CD4-positive, alpha-beta T cell (primary cell): ENCODE measurements at regions of chr19 and their contacts with region 1.

Region 1: DNA sequence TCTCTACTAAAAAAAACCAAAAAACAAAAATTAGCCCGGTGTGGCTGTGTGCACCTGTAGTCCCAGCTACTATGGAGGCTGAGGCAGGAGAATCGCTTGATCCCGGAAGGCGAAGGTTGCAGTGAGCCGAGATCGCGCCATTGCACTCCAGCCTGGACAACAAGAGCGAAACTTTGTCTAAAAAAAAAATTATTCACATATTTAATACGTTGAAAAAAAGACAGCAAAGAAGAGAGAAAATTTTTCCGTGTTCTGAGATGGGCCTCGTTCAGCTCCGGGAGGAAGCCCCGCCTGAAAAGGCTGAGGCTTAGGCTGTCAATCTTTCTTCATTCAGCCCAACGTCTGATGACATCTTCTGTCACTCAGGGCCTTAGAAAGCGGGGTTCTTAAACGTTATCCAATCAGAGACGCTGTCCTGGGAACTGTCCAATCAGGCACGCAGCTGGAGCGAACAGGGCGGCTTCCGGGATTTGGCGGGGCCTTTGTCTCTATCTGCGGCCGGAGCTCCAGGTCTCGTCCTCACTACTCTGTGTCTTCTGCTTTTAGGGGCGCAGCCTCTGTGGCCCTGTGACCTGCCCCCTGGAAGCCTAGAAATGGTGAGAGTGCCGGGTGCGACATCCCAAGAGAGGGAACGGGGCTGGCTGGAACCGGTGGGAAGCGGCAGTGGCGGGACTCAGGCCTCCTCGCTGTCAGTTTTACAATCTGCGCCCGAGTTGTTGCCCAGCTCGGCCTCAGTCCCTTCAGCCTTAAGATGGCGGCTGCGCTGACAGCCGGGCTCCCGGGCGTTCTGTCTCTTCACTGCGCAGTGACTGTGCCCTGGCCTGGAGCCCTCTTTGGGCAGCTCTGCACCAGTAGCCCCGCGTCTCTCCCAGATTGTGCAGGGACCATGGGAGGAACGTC is at the start of gene ZNF726:
- DNase-seq: peak; percentile 72 to 95 (median 79)
- ATAC-seq: peak; percentile 99
- H3K4me3 ChIP-seq: peak within 1 kb of the TSS; percentile 74
- H3K4me3 Mint-ChIP-seq: peak within 1 kb of the TSS; percentile 98
- H3K27ac ChIP-seq: peak within 1 kb of the TSS in 1 of 2 donors; percentile 53
- H3K27ac Mint-ChIP-seq: peak within 1 kb of the TSS; percentile 87
- H3K4me1 ChIP-seq: peaks cover 16% of the 10 kb centered on the region
- H3K4me1 Mint-ChIP-seq: peaks cover 7% of the 10 kb centered on the region
- H3K27me3 ChIP-seq: no peaks in the 10 kb centered on the region
- H3K27me3 Mint-ChIP-seq: no peaks in the 10 kb centered on the region
- CTCF ChIP-seq: no peak
- total RNA-seq, gene ZNF726: 2.6 to 3.5 TPM

Region 2: GRCh38 chr19:22634450-22634827 is 1280.2 kb before region 1 on chr19:
- CTCF ChIA-PET with region 1: no interaction called
- POLR2A ChIA-PET with region 1: no interaction called
- intact Hi-C with region 1: loop called in 1 of 2 experiments (anchors 5 kb)
- DNase-seq: no peak
- ATAC-seq: peak; percentile 16
- H3K4me3 ChIP-seq: peak overlapping the region; percentile 65
- H3K4me3 Mint-ChIP-seq: peak overlapping the region; percentile 96
- H3K27ac ChIP-seq: no peak overlapping the region
- H3K27ac Mint-ChIP-seq: peak overlapping the region; percentile 83
- H3K4me1 ChIP-seq: no peaks in the 10 kb centered on the region
- H3K4me1 Mint-ChIP-seq: peaks cover 16% of the 10 kb centered on the region
- H3K27me3 ChIP-seq: peaks cover 0 to 2% of the 10 kb centered on the region in 2 experiments
- H3K27me3 Mint-ChIP-seq: no peaks in the 10 kb centered on the region
- CTCF ChIP-seq: no peak

Region 3: DNA sequence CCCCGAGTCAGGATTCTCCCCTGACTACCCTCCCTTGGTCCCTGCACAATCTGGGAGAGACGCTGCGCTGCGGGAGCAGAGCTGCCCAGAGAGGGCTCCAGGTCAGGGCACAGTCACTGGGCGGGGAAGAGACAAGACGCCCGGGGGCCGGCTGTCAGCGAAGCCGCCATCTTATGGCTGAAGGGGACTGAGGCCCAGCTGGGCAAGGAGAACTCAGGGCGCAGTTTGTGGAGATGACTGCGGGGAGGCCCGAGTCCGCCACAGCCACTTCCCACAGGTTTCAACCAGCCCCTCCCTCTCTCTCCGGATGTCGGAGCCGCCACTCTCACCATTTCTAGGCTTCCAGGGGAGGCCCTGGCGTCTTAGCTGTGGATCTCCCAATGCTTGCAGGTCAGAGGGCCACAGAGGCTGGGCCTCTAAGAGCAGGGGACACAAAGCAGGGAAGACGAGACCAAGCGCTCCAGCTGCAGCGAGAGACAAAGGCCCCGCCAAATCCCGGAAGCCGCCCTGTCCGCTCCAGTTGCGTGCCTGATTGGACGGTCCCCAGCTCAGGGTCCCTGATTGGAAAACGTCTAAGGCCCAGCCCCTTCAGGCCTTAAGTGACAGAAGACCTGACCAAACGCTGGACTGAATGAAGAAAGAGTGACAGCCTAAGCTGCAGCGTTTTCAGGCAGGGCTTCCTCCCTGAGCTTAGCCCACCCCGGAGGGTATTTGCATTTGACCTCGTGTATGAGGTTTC is 664.6 kb before region 1 on chr19 and contains the start of gene ZNF724:
- CTCF ChIA-PET with region 1: no interaction called
- POLR2A ChIA-PET with region 1: no interaction called
- intact Hi-C with region 1: loop called (anchors 10 kb)
- DNase-seq: peak; percentile 78 to 94 (median 82)
- ATAC-seq: peak; percentile 99
- H3K4me3 ChIP-seq: peak within 1 kb of the TSS; percentile 83
- H3K4me3 Mint-ChIP-seq: peak within 1 kb of the TSS; percentile 98
- H3K27ac ChIP-seq: peak within 1 kb of the TSS; percentile 29 to 55
- H3K27ac Mint-ChIP-seq: peak within 1 kb of the TSS; percentile 83
- H3K4me1 ChIP-seq: peaks cover 12% of the 10 kb centered on the region
- H3K4me1 Mint-ChIP-seq: peaks cover 13% of the 10 kb centered on the region
- H3K27me3 ChIP-seq: no peaks in the 10 kb centered on the region
- H3K27me3 Mint-ChIP-seq: no peaks in the 10 kb centered on the region
- CTCF ChIP-seq: no peak
- total RNA-seq, gene ZNF724: 4.2 to 5.5 TPM

Region 4: GRCh38 chr19:23283927-23284326 is 630.7 kb before region 1 on chr19:
- CTCF ChIA-PET with region 1: no interaction called
- POLR2A ChIA-PET with region 1: no interaction called
- intact Hi-C with region 1: loop called in 1 of 2 experiments (anchors 5 kb)
- DNase-seq: peak; percentile 43 to 83 (median 55)
- ATAC-seq: peak; percentile 98
- H3K4me3 ChIP-seq: no peak overlapping the region
- H3K4me3 Mint-ChIP-seq: no peak overlapping the region
- H3K27ac ChIP-seq: no peak overlapping the region
- H3K27ac Mint-ChIP-seq: no peak overlapping the region
- H3K4me1 ChIP-seq: peaks cover 2% of the 10 kb centered on the region
- H3K4me1 Mint-ChIP-seq: peaks cover 8% of the 10 kb centered on the region
- H3K27me3 ChIP-seq: no peaks in the 10 kb centered on the region
- H3K27me3 Mint-ChIP-seq: no peaks in the 10 kb centered on the region
- CTCF ChIP-seq: peak; percentile 61

Region 5: DNA sequence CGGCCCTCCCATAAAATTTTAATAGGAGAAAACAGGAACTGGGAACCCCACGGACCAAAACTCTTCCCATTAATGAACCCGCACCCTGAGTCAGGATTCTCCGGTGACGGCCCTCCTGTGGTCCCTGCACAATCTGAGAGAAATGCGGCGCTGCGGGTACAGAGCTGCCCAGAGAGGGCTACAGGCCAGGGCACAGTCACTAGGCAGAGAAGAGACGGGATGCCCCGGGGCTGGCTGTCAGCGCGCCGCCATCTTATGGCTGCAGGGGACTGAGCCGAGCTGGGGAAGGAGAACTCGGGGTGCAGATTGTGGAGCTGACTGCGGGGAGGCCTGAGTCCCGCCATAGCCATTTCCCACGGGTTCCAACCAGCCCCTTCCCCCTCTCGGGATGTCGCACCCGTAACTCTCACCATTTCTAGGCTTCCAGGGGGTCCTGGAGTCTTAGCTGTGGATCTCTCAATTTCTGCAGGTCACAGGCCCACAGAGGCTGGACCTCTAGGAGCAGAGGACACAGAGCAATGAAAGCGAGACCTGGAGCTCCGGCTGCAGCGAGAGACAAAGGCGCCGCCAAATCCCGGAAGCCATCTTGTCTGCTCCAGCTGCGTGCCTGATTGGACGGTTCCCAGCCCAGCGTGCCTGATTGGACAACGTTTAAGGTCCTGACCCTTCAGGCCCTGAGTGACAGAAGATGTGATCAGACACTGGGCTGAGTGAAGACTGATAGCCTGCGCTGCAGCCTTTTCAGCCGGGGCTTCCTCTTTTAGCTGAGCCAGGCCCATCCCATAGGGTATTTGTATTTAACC is 227.8 kb before region 1 on chr19 and contains the start of gene ZNF675:
- CTCF ChIA-PET with region 1: no interaction called
- POLR2A ChIA-PET with region 1: interaction called, 14 read pairs
- intact Hi-C with region 1: loop called (anchors 5 to 10 kb)
- DNase-seq: peak; percentile 76 to 95 (median 84)
- ATAC-seq: peak; percentile 96
- H3K4me3 ChIP-seq: peak within 1 kb of the TSS; percentile 77
- H3K4me3 Mint-ChIP-seq: peak within 1 kb of the TSS; percentile 100
- H3K27ac ChIP-seq: peak within 1 kb of the TSS; percentile 79 to 82
- H3K27ac Mint-ChIP-seq: peak within 1 kb of the TSS; percentile 99
- H3K4me1 ChIP-seq: peaks cover 19% of the 10 kb centered on the region
- H3K4me1 Mint-ChIP-seq: peaks cover 49% of the 10 kb centered on the region
- H3K27me3 ChIP-seq: no peaks in the 10 kb centered on the region
- H3K27me3 Mint-ChIP-seq: no peaks in the 10 kb centered on the region
- CTCF ChIP-seq: no peak
- total RNA-seq, gene ZNF675: 15.6 to 16.4 TPM

Region 6: DNA sequence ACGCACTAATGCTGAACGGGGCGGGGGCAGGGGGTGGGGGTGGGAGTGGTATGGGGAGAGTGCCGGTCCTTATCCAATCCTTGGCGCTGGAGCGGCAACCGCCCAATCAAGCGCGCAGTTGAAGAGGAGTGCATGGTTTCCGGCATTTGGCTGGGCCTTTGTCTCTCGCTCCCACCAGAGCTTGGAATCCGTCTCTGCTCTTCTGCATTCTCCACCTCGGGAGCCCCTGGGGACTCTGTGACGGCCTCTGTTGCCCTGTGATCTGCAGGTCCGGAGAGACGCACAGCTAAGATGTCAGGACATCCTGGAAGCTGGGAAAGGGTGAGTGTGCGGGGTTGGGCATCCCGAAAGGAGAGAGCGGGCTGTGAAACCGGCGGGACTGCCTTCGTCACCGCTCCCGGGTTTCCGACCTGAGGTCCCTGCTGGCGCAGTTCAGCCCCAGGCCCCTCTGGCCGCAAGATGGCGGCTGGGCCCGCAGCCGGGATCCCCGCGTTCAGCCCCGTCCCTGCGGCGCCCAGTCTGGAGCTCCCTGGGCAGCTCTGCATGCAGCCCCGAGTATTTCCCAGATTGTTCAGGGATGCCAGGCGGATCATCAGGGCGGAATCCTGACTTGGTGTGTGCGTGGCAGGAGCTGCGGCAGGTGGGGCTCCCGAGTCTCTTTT is 118.8 kb after region 1 on chr19:
- CTCF ChIA-PET with region 1: no interaction called
- POLR2A ChIA-PET with region 1: interaction called, 32 read pairs
- intact Hi-C with region 1: loop called (anchors 2 to 5 kb)
- DNase-seq: peak; percentile 65 to 92 (median 77)
- ATAC-seq: peak; percentile 99
- H3K4me3 ChIP-seq: peak overlapping the region; percentile 99
- H3K4me3 Mint-ChIP-seq: peak overlapping the region; percentile 100
- H3K27ac ChIP-seq: peak overlapping the region; percentile 66 to 85
- H3K27ac Mint-ChIP-seq: peak overlapping the region; percentile 94
- H3K4me1 ChIP-seq: peaks cover 51% of the 10 kb centered on the region
- H3K4me1 Mint-ChIP-seq: peaks cover 47% of the 10 kb centered on the region
- H3K27me3 ChIP-seq: no peaks in the 10 kb centered on the region
- H3K27me3 Mint-ChIP-seq: no peaks in the 10 kb centered on the region
- CTCF ChIP-seq: no peak